AG04449 (cell line): ENCODE measurements at regions of chr10 and their contacts with region 1.

Region 1: DNA sequence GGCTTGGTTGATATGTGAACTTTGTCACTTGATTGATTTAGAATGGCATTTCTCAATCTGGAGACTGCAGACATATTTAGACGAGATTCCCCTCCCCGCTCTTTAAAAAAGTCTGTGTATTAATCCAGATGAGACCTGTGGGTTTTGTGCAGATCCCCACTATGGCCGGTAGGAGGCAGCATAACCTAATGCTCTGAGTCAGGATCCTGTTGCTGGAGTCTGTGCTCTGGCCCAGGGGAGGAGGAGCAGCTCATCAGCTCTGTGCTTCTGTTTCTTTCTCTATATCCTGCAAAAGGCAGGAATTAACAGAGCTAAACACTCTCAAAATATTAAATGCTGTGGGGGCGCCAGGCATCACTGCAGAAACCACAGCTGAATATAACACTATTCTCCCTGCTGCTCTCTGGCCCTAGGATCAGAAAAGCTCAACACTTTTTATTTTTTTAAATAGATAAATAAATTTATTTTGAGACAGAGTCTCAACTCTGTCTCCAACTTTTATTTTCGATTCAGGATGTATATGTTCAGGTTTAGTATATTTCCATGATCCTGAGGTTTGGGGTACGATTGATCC is 23.9 kb upstream of the SEPHS1 start:
- DNase-seq: peak; percentile 33
- H3K4me3 ChIP-seq: no peak overlapping the region
- CTCF ChIP-seq: peak; percentile 83

Region 2: DNA sequence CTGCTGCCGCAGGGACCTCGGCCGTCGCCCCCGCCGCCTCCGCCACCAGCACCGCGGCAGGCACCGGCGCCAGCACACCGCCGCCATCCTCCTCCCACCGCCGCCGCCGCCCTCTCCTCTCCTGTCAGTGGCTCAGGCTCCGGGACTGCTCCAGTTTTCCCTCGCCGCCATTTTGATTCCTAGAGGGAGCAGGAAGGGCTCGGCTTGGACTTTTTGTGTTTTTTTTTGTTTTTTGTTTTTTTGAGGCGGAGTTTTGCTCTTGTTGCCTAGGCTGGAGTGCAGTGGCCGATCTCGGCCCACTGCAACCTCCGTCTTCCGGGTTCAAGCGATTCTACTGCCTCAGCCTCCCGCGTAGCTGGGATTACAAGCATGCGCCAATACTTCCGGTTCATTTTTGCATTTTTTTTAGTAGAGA is 213.5 kb before region 1 on chr10:
- CTCF ChIA-PET with region 1: no interaction called
- POLR2A ChIA-PET with region 1: no interaction called
- DNase-seq: no peak
- H3K4me3 ChIP-seq: no peak overlapping the region
- CTCF ChIP-seq: no peak

Region 3: GRCh38 chr10:13360587-13360986 is 11.4 kb before region 1 on chr10:
- CTCF ChIA-PET with region 1: interaction called, 12 read pairs
- POLR2A ChIA-PET with region 1: no interaction called
- DNase-seq: no peak
- H3K4me3 ChIP-seq: no peak overlapping the region
- CTCF ChIP-seq: no peak

Region 4: GRCh38 chr10:13440185-13441061 is 68.4 kb after region 1 on chr10:
- CTCF ChIA-PET with region 1: interaction called, 68 read pairs
- POLR2A ChIA-PET with region 1: no interaction called
- DNase-seq: no peak
- H3K4me3 ChIP-seq: peak overlapping the region; percentile 41
- CTCF ChIP-seq: peak; percentile 92

Region 5: GRCh38 chr10:13528875-13529713 is 157.1 kb after region 1 on chr10 and contains the start of gene BEND7:
- CTCF ChIA-PET with region 1: interaction called, 101 read pairs
- POLR2A ChIA-PET with region 1: no interaction called
- DNase-seq: no peak
- H3K4me3 ChIP-seq: peak within 1 kb of the TSS; percentile 57
- CTCF ChIP-seq: no peak

Region 6: DNA sequence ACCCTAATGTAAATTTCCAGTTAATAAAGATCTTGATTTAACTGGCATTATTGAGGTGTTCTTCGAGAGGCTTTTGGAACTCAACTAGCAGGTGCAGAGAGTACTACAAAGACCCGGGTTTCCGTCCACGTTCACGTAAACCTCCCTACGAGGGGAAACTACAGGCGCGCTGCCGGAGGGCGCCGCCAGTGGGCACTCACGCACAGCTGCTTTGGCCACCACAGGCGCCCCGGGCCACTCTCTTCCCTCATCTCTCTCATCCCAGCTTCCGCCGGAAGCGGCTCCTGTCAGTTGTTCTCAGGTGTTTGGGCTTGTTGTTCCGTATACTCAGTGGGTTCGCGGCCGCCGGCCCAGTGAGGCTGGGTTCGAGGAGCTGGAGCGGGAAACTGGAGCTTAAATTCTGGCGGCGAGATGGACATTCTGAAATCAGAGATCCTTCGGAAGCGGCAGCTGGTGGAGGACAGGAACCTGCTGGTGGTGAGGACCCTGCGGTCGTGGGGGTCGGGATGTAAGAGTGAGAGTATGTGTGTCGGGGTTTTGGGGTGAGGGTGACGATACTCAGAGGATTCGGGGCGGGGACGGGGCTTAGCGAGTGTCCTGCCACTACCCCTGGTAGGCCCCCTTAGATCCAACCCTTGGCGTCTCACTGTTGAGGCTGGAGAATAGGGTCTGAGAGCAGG is 214.8 kb after region 1 on chr10 and contains the start of gene PRPF18:
- CTCF ChIA-PET with region 1: interaction called, 26 read pairs
- POLR2A ChIA-PET with region 1: no interaction called
- DNase-seq: peak; percentile 38
- H3K4me3 ChIP-seq: peak within 1 kb of the TSS; percentile 99
- CTCF ChIP-seq: peak; percentile 99

Region 7: GRCh38 chr10:13788711-13789447 is 416.9 kb after region 1 on chr10:
- CTCF ChIA-PET with region 1: no interaction called
- POLR2A ChIA-PET with region 1: no interaction called
- DNase-seq: no peak
- H3K4me3 ChIP-seq: no peak overlapping the region
- CTCF ChIP-seq: no peak